CD14-positive monocyte (primary cell): ENCODE measurements at regions of chr4 and their contacts with region 1.

Region 1: DNA sequence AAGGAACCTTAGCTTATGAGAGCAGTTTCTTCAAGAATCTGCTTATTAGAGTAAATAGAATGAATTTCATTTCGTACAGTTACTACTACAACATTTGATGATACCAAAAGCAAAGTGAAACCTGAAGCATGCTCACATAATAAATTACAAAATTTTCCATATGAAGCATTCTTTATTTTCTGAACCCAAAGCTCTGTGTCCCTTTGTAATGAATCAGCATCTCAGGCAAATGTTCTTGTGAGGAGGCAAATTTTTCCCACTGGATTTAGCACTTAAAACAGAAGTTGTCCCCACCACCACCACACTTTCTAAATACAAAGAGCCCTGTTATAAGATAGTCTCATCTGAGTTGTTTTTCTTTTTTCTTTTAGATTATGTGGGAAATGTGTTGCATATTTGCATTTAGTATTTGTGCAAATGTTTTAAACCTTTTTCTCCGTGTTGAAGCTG is 70.7 kb upstream of the NFKB1 start:
- DNase-seq: no peak
- H3K4me3 ChIP-seq: peak overlapping the region; percentile 63 to 79 (median 77)
- H3K4me3 Mint-ChIP-seq: peak overlapping the region; percentile 88 to 92
- H3K27ac ChIP-seq: peak overlapping the region in 1 of 2 donors; percentile 56
- H3K27ac Mint-ChIP-seq: peak overlapping the region in 3 of 7 donors; percentile 72 to 93 (median 79)
- H3K4me1 ChIP-seq: peaks cover 4 to 9% of the 10 kb centered on the region in 2 donors
- H3K4me1 Mint-ChIP-seq: peaks cover 6% of the 10 kb centered on the region
- H3K27me3 ChIP-seq: no peaks in the 10 kb centered on the region
- H3K27me3 Mint-ChIP-seq: peaks cover 2 to 5% (median 5%) of the 10 kb centered on the region in 3 donors
- CTCF ChIP-seq: no peak

Region 2: GRCh38 chr4:103008875-103009729 is 578.6 kb after region 1 on chr4:
- intact Hi-C with region 1: loop called in 1 of 2 experiments (anchors 5 kb)
- DNase-seq: peak; percentile 50 to 72 (median 63)
- H3K4me3 ChIP-seq: no peak overlapping the region
- H3K4me3 Mint-ChIP-seq: no peak overlapping the region
- H3K27ac ChIP-seq: no peak overlapping the region
- H3K27ac Mint-ChIP-seq: no peak overlapping the region
- H3K4me1 ChIP-seq: no peaks in the 10 kb centered on the region
- H3K4me1 Mint-ChIP-seq: no peaks in the 10 kb centered on the region
- H3K27me3 ChIP-seq: no peaks in the 10 kb centered on the region
- H3K27me3 Mint-ChIP-seq: peaks cover 0 to 1% (median 1%) of the 10 kb centered on the region in 3 donors
- CTCF ChIP-seq: peak; percentile 77